ENCODE measurements at regions of chr12 and their contacts with region 1.

Region 1: GRCh38 chr12:52004042-52004648 is 2.6 kb upstream of the TAMALIN start:
- DNase-seq: no peak

Region 2: GRCh38 chr12:51891843-51892242 is 112.3 kb before region 1 on chr12:
- intact Hi-C with region 1: no loop called
- DNase-seq: no peak

Region 3: GRCh38 chr12:51941011-51941581 is 63.0 kb before region 1 on chr12:
- intact Hi-C with region 1: no loop called
- DNase-seq: no peak

Region 4: DNA sequence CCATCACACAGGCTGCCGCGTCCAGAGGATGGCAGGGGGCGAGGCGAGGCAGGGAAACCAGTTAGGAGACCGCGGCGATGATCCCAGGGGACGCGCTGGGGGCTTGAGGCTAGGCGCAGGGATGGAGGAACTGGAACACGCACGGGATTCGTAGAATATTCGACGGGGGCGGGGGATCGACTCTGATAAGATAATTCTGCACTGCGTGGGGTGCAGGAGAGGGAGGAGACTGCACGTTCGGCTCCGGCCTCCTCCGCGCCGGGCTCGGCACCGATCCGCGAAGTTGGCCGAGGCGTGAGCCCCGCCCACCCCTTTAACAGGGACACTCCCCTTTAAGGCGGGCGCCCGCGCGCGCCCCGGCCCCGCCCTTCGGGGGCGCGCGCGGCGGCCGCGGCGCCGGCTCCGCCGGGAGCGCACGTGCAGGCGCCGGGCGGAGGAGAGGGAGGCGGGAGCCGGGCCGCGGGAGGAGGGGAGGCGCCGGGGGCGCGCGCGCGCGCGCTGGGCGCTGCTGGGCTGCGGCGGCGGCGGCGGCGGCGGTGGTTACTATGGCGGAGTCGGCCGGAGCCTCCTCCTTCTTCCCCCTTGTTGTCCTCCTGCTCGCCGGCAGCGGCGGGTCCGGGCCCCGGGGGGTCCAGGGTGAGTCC is 52.8 kb before region 1 on chr12 and contains the start of gene ACVR1B:
- intact Hi-C with region 1: no loop called
- DNase-seq: peak; percentile 95
- total RNA-seq, gene ACVR1B: 9.3 TPM

Region 5: GRCh38 chr12:52082988-52083637 is 79.0 kb after region 1 on chr12:
- intact Hi-C with region 1: loop called (anchors 5 kb)
- DNase-seq: no peak

Region 6: GRCh38 chr12:52121824-52122539 is 117.8 kb after region 1 on chr12:
- intact Hi-C with region 1: loop called (anchors 5 kb)
- DNase-seq: peak; percentile 78

Measured in cardiac septum (tissue), 1 donor.